ENCODE measurements at regions of chr20 and their contacts with region 1.

Region 1: GRCh38 chr20:44388466-44389023 is 33.0 kb downstream of the HNF4A start:
- DNase-seq: peak; percentile 68 to 73
- H3K4me3 ChIP-seq: no peak overlapping the region
- H3K27ac ChIP-seq: no peak overlapping the region
- H3K4me1 ChIP-seq: no peaks in the 10 kb centered on the region; the same call in 1 of the 2 replicates
- H3K27me3 ChIP-seq: no peaks in the 10 kb centered on the region
- CTCF ChIP-seq: peak; percentile 95

Region 2: GRCh38 chr20:44115762-44116644 is 272.5 kb before region 1 on chr20:
- CTCF ChIA-PET with region 1: no interaction called
- POLR2A ChIA-PET with region 1: no interaction called
- intact Hi-C with region 1: loop called (anchors 1 kb)
- DNase-seq: no peak
- H3K4me3 ChIP-seq: no peak overlapping the region
- H3K27ac ChIP-seq: no peak overlapping the region
- H3K4me1 ChIP-seq: peaks cover 7% of the 10 kb centered on the region; the same call in 1 of the 2 replicates
- H3K27me3 ChIP-seq: no peaks in the 10 kb centered on the region
- CTCF ChIP-seq: no peak

Region 3: DNA sequence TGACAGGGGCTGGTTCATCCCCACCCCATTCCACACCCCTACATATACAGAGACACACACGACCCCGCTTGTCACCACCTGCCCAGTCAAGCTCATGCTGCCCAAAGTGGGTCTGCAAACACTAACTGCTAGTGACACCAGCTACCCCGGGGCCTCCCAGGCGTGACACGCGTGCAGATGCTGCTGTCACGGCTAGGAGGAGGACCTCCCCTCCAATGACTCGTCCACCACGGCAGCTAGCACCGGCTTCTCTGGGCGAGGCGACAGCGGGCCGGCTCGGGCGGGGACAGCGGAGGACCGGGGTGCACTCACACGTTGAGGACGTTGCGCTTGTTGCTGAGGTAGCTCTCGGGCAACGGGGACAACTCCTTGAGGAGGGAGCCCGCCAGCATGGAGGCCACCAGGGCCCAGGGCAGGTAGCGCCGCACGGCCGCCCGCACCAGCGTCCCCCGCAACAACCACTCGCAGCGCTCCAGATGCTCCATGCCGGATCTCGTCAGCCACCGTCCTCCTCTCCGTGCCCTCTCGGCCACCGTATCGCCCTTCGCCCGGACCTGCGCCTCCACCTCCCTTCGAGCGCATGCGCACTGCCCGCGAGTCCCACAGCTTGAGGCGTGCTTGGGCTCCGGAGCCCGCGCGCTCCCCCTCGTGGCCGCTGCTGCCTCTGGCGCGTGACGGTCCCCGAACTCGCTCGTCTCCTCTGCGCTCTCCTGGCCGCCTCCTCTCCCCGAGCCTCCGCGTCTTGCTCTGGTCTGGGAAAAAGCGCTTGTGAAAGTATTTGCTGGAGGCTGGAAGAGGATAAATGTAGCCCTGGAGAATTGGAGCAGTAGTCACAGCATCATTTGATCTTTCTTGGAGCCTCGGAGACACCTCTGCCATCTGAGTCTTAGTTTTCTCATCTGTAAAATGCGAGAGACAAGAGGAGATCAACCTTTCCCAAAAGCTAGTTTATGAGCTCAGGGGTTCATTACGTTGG is 77.6 kb before region 1 on chr20 and contains the start of gene FITM2:
- CTCF ChIA-PET with region 1: no interaction called
- POLR2A ChIA-PET with region 1: no interaction called
- intact Hi-C with region 1: loop called (anchors 1 kb)
- DNase-seq: peak; percentile 86 to 98
- H3K4me3 ChIP-seq: peak within 1 kb of the TSS; percentile 69
- H3K27ac ChIP-seq: no peak within 1 kb of the TSS
- H3K4me1 ChIP-seq: peaks cover 10% of the 10 kb centered on the region
- H3K27me3 ChIP-seq: no peaks in the 10 kb centered on the region
- CTCF ChIP-seq: peak; percentile 94
- total RNA-seq, gene FITM2: 6.1 and 7.4 TPM in 2 replicates

Region 4: GRCh38 chr20:44609511-44610312 is 221.2 kb after region 1 on chr20:
- CTCF ChIA-PET with region 1: interaction called, 3 read pairs
- POLR2A ChIA-PET with region 1: no interaction called
- intact Hi-C with region 1: loop called (anchors 1 kb)
- DNase-seq: peak; percentile 85 to 91
- H3K4me3 ChIP-seq: no peak overlapping the region
- H3K27ac ChIP-seq: 0 out of 2 replicates have a peak overlapping the region, but pooled peaks have one; percentile 0
- H3K4me1 ChIP-seq: peaks cover 7% of the 10 kb centered on the region
- H3K27me3 ChIP-seq: no peaks in the 10 kb centered on the region
- CTCF ChIP-seq: peak; percentile 99

Region 5: GRCh38 chr20:44747166-44748004 is 358.8 kb after region 1 on chr20:
- CTCF ChIA-PET with region 1: no interaction called
- POLR2A ChIA-PET with region 1: no interaction called
- intact Hi-C with region 1: loop called (anchors 5 kb)
- DNase-seq: peak; percentile 93 to 94
- H3K4me3 ChIP-seq: peak overlapping the region; percentile 11; the same call in 1 of the 2 replicates
- H3K27ac ChIP-seq: peak overlapping the region; percentile 89
- H3K4me1 ChIP-seq: peaks cover 22% of the 10 kb centered on the region
- H3K27me3 ChIP-seq: peaks cover 42% of the 10 kb centered on the region
- CTCF ChIP-seq: peak; percentile 95

Region 6: GRCh38 chr20:45111799-45112471 is 723.4 kb after region 1 on chr20:
- CTCF ChIA-PET with region 1: no interaction called
- POLR2A ChIA-PET with region 1: no interaction called
- intact Hi-C with region 1: no loop called
- DNase-seq: no peak
- H3K4me3 ChIP-seq: no peak overlapping the region
- H3K27ac ChIP-seq: no peak overlapping the region
- H3K4me1 ChIP-seq: no peaks in the 10 kb centered on the region
- H3K27me3 ChIP-seq: no peaks in the 10 kb centered on the region
- CTCF ChIP-seq: peak; percentile 77